B cell (primary cell): ENCODE measurements at regions of chr3 and their contacts with region 1.

Region 1: DNA sequence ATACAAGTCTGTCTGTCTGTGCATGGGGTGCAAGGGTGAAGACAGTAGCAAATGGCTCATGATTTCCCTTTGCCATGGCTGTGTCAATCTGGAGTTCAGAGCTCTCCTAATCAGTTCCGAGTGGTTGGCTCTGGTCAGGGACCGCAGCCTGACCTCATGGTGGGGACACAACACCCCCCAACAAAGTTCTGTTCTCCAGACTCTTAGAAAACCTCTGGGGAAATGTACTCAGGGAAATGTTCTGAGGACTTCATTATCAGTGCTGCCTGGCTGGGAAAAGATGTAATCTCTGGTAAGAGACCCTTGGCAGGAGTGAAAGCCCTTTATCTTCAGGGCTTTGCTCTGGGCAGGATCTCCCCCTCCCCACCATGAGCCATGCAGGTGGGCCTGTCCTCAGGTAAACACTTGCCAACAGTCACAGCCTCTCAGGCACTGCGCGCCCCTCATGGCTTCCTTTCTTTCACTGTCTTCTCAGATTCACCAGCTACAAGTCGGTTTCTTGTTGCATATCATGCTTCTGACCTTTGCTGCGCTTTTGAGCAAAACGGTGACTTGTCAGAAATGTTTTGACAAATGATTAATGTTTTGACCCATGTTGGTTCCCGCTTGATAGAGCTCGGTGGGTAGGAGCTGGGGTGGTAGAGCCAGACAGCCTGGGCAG is 95.5 kb downstream of the ST6GAL1 start:
- DNase-seq: peak; percentile 55
- ATAC-seq: peak; percentile 37
- H3K4me3 ChIP-seq: peak overlapping the region; percentile 19 to 65 (median 42)
- H3K4me3 Mint-ChIP-seq: peak overlapping the region; percentile 89
- H3K27ac ChIP-seq: peak overlapping the region; percentile 86 to 87
- H3K27ac Mint-ChIP-seq: peak overlapping the region; percentile 90
- H3K4me1 ChIP-seq: peaks cover 84 to 92% of the 10 kb centered on the region in 2 donors
- H3K4me1 Mint-ChIP-seq: peaks cover 76% of the 10 kb centered on the region
- H3K27me3 ChIP-seq: no peaks in the 10 kb centered on the region
- H3K27me3 Mint-ChIP-seq: no peaks in the 10 kb centered on the region
- CTCF ChIP-seq: no peak

Region 2: DNA sequence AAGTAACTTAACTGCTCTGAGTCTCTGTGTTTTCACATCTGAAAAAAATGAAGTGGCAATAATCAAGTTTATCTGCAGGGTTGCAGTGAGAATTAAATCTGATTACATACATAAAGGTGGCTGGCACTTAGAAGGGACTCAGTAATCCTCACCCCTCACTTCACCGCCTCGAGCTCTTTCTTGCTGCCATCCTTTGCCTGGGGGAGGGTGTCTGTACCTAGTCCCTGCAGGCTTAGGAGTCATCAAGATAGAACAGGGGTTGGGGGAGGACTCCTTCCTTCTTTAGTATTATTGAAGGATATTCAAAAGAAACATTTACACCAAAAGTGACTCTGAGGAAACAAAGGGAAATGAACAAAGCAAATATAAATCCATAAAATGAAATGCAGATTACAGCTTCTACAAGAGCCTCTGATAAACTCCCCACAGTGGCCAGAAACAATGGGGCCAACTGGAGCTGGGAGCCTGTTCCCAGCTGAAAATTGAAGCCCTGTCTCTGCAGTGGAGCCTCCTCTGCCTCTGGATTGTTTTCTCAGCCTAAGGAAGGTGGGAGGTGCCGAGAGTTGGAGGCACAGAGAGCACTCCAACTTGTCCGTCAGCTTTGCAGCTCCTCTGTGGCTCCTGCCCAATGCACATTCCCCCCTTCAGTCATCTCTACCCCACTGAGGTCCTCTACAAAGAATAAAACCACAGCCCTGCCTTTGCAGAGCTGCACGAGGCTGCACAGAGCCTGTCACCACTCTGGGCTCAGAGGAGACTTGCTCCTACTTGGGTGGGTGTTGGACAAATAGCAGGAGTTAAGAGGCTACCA is 523.4 kb before region 1 on chr3:
- CTCF ChIA-PET with region 1: no interaction called
- POLR2A ChIA-PET with region 1: no interaction called
- intact Hi-C with region 1: no loop called
- DNase-seq: no peak
- ATAC-seq: no peak
- H3K4me3 ChIP-seq: no peak overlapping the region
- H3K4me3 Mint-ChIP-seq: no peak overlapping the region
- H3K27ac ChIP-seq: no peak overlapping the region
- H3K27ac Mint-ChIP-seq: no peak overlapping the region
- H3K4me1 ChIP-seq: no peaks in the 10 kb centered on the region
- H3K4me1 Mint-ChIP-seq: peaks cover 7% of the 10 kb centered on the region
- H3K27me3 ChIP-seq: peaks cover 0 to 4% (median 0%) of the 10 kb centered on the region in 4 experiments
- H3K27me3 Mint-ChIP-seq: peaks cover 14% of the 10 kb centered on the region
- CTCF ChIP-seq: no peak

Region 3: DNA sequence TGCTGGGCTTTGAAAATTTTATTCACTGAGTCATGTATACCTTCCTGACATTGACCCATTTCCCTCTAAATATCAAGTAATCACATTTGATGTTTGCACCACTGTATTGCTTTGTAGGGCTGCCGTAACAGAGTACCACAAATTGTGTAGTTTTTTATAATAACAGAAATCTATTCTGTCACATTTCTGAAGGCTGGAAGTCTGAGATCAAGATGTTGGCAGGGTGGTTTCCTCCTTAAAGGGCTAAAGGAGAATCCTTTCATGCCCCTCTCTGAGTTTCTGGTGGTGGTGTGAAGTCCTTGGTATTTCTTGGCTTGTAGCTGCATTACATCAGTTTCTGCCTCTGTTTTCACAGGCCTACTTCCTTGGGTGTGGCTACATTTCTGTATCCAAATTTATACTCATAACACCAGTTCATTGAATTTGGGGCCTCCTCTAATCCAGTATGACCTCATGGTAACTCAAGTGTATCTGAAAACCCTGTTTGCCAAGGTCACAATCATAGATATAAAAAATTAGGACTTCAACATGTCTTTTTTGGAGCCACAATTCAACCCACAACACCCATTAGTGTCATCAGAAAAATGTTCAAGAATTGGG is 124.6 kb before region 1 on chr3:
- CTCF ChIA-PET with region 1: no interaction called
- POLR2A ChIA-PET with region 1: no interaction called
- intact Hi-C with region 1: no loop called
- DNase-seq: peak; percentile 35
- ATAC-seq: peak; percentile 61
- H3K4me3 ChIP-seq: peak overlapping the region in 1 of 5 experiments; percentile 17
- H3K4me3 Mint-ChIP-seq: peak overlapping the region; percentile 75
- H3K27ac ChIP-seq: peak overlapping the region; percentile 57 to 65
- H3K27ac Mint-ChIP-seq: peak overlapping the region; percentile 90
- H3K4me1 ChIP-seq: peaks cover 17 to 24% of the 10 kb centered on the region in 2 donors
- H3K4me1 Mint-ChIP-seq: peaks cover 26% of the 10 kb centered on the region
- H3K27me3 ChIP-seq: no peaks in the 10 kb centered on the region
- H3K27me3 Mint-ChIP-seq: no peaks in the 10 kb centered on the region
- CTCF ChIP-seq: no peak

Region 4: GRCh38 chr3:186938716-186939115 is 87.1 kb before region 1 on chr3:
- CTCF ChIA-PET with region 1: no interaction called
- POLR2A ChIA-PET with region 1: interaction called, 15 read pairs
- intact Hi-C with region 1: no loop called
- DNase-seq: no peak
- ATAC-seq: no peak
- H3K4me3 ChIP-seq: no peak overlapping the region
- H3K4me3 Mint-ChIP-seq: no peak overlapping the region
- H3K27ac ChIP-seq: peak overlapping the region in 1 of 2 donors; percentile 43
- H3K27ac Mint-ChIP-seq: peak overlapping the region; percentile 46
- H3K4me1 ChIP-seq: peaks cover 6 to 26% of the 10 kb centered on the region in 2 donors
- H3K4me1 Mint-ChIP-seq: peaks cover 64% of the 10 kb centered on the region
- H3K27me3 ChIP-seq: no peaks in the 10 kb centered on the region
- H3K27me3 Mint-ChIP-seq: no peaks in the 10 kb centered on the region
- CTCF ChIP-seq: no peak

Region 5: GRCh38 chr3:187000711-187001151 is 25.1 kb before region 1 on chr3:
- CTCF ChIA-PET with region 1: interaction called, 5 read pairs
- POLR2A ChIA-PET with region 1: interaction called, 11 read pairs
- intact Hi-C with region 1: loop called (anchors 5 kb)
- DNase-seq: peak; percentile 86
- ATAC-seq: peak; percentile 77
- H3K4me3 ChIP-seq: peak overlapping the region in 3 of 5 experiments; percentile 12 to 32 (median 22)
- H3K4me3 Mint-ChIP-seq: peak overlapping the region; percentile 88
- H3K27ac ChIP-seq: peak overlapping the region; percentile 94 to 98
- H3K27ac Mint-ChIP-seq: peak overlapping the region; percentile 99
- H3K4me1 ChIP-seq: peaks cover 82 to 93% of the 10 kb centered on the region in 2 donors
- H3K4me1 Mint-ChIP-seq: peaks cover 87% of the 10 kb centered on the region
- H3K27me3 ChIP-seq: no peaks in the 10 kb centered on the region
- H3K27me3 Mint-ChIP-seq: no peaks in the 10 kb centered on the region
- CTCF ChIP-seq: no peak

Region 6: DNA sequence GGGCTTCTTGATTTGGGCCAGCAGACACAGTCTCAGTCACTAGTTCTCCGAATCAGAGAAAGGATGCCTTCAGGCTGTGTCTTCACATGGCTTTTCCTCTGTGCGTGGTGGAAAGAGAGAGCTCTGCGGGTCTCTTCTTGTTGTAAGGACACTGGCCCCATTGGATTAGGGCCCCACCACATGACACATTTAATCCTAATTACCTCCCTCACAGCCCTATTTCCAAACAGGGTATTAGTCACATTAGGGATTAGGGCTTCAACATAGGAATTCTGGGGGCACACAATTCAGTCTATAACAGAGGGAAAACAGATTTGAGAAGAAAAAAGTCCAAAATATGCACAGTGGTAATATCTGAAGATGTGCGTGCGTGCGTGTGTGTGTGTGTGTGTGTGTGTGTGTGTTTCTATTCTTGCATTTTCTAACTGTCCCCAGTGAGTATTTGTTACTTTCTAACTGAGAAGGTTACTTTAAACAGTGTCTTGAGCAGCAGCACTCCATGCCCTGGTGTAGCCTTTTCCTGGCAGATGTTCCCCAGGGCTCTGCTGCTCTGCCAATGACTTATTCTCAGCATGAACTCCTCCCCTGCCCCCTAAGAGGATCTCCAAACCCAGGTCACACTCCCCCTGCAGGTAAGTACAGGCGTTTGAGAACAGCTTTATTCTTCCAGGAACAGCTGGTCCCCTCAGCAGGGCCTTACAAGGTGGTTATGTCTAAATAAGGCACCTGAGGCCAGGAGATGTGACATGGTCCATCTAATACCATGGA is 40.6 kb after region 1 on chr3:
- CTCF ChIA-PET with region 1: interaction called, 14 read pairs
- POLR2A ChIA-PET with region 1: interaction called, 17 read pairs
- intact Hi-C with region 1: loop called (anchors 2 kb)
- DNase-seq: peak; percentile 87
- ATAC-seq: peak; percentile 31
- H3K4me3 ChIP-seq: peak overlapping the region in 3 of 5 experiments; percentile 19 to 45 (median 26)
- H3K4me3 Mint-ChIP-seq: peak overlapping the region; percentile 81
- H3K27ac ChIP-seq: peak overlapping the region; percentile 97 to 98
- H3K27ac Mint-ChIP-seq: peak overlapping the region; percentile 97
- H3K4me1 ChIP-seq: peaks cover 70 to 86% of the 10 kb centered on the region in 2 donors
- H3K4me1 Mint-ChIP-seq: peaks cover 87% of the 10 kb centered on the region
- H3K27me3 ChIP-seq: no peaks in the 10 kb centered on the region
- H3K27me3 Mint-ChIP-seq: no peaks in the 10 kb centered on the region
- CTCF ChIP-seq: peak; percentile 40

Region 7: DNA sequence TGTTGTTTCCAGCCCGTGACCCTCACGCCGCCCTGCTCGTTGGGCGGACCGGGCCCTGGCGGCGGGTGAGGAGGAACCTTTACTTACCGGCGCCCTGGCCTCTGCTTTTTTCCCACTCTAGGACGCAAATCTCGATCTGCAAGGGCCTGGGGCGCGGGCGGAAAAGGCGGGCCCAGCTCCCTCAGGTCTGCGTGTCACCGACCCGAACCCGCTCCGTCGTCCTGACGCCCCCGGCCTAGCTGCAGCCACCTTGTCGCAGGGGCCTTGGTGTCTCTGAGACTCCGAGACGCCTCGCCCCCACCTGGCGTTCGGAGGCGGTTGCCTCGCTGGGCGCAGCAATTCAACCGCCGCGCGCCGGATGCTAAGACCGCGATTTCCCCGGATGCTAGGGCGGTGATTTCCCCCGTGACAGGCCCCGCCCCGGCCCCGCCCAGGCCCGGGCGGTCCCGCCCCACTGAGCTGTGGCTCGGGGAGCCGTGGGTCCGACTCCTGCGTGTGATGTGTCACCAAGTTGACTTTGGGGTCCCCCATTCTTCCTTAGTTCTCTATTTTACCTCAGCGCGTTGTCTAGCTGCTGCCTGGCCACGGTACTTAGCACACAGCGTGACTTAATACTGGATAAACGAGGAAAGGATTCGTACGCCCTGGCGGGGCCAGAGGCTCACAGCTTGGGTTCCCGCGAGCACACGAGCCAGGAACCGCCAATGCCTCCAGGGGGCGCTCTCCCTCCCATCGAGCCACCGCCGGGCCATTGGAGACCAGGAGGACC is 113.5 kb after region 1 on chr3 and contains the start of gene RPL39L:
- CTCF ChIA-PET with region 1: interaction called, 12 read pairs
- POLR2A ChIA-PET with region 1: interaction called, 4 read pairs
- intact Hi-C with region 1: loop called (anchors 5 kb)
- DNase-seq: peak; percentile 95
- ATAC-seq: peak; percentile 95
- H3K4me3 ChIP-seq: peak within 1 kb of the TSS in 4 of 5 experiments; percentile 49 to 68 (median 58)
- H3K4me3 Mint-ChIP-seq: peak within 1 kb of the TSS; percentile 90
- H3K27ac ChIP-seq: peak within 1 kb of the TSS; percentile 77 to 79
- H3K27ac Mint-ChIP-seq: peak within 1 kb of the TSS; percentile 90
- H3K4me1 ChIP-seq: peaks cover 12 to 14% of the 10 kb centered on the region in 2 donors
- H3K4me1 Mint-ChIP-seq: peaks cover 16% of the 10 kb centered on the region
- H3K27me3 ChIP-seq: no peaks in the 10 kb centered on the region
- H3K27me3 Mint-ChIP-seq: no peaks in the 10 kb centered on the region
- CTCF ChIP-seq: peak; percentile 79
- total RNA-seq, gene RPL39L: 2.0 and 3.1 TPM in 2 replicates